ENCODE measurements at regions of chr14 and their contacts with region 1.

Region 1: DNA sequence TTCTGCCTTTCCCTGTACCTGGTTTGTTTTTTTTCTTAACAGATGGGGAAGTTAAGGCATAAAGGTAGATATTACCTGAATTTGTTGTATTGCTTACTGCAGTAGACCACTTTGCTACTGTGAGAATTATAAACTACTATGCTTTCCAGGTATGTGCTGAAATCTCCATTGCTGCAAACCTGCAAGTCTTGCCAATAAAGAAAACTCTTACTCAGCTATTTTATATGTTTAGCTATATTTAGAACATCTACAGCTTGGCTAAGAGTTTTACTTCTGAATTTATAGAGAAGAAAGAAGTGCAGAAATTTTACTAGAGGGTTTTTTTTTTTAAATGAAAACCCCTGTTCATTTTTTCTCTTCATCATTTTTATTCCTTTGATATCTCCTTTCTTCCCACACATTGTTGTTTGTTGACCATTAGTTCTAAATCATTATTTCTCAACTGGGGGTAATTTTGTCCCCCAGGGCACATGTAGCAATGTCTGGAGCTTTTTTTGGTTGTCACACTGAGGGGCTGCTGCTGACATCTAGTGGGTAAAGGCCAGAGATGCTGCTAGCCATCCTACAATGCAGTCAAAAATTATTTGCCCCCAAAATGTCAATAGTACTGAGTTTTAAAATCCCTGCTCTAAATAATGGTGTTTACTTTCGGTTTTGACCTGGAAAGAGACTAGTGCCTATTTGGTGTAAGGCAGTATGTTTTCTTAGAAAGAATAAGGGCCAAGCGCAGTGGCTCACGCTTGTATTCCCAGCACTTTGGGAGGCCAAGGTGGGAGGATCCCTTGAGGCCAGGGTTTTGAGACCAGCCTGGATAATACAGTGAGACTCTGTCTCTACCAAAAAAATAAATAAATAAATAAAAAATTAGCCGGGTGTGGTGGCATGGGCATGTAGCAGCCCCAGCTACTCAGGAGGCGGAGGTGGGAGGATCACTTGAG is 48.6 kb downstream of the PCNX1 start:
- DNase-seq: peak; percentile 41
- H3K4me3 ChIP-seq: no peak overlapping the region
- H3K27ac ChIP-seq: no peak overlapping the region
- H3K4me1 ChIP-seq: no peaks in the 10 kb centered on the region
- H3K27me3 ChIP-seq: no peaks in the 10 kb centered on the region
- CTCF ChIP-seq: peak; percentile 49 to 64
- POLR2A ChIP-seq: no peak

Region 2: GRCh38 chr14:70816525-70816924 is 139.3 kb before region 1 on chr14:
- CTCF ChIA-PET with region 1: interaction called, 43 read pairs
- POLR2A ChIA-PET with region 1: no interaction called
- dilution Hi-C with region 1: no loop called
- intact Hi-C with region 1: loop called (anchors 1 kb)
- DNase-seq: no peak
- H3K4me3 ChIP-seq: no peak overlapping the region
- H3K27ac ChIP-seq: no peak overlapping the region
- H3K4me1 ChIP-seq: no peaks in the 10 kb centered on the region
- H3K27me3 ChIP-seq: peaks cover 28 to 33% of the 10 kb centered on the region in 2 experiments
- CTCF ChIP-seq: no peak
- POLR2A ChIP-seq: no peak

Region 3: GRCh38 chr14:70821584-70822529 is 134.0 kb before region 1 on chr14:
- CTCF ChIA-PET with region 1: interaction called, 43 read pairs
- POLR2A ChIA-PET with region 1: no interaction called
- dilution Hi-C with region 1: no loop called
- intact Hi-C with region 1: loop called (anchors 1 kb)
- DNase-seq: peak; percentile 15
- H3K4me3 ChIP-seq: peak overlapping the region; percentile 25 to 57 (median 47)
- H3K27ac ChIP-seq: no peak overlapping the region
- H3K4me1 ChIP-seq: no peaks in the 10 kb centered on the region
- H3K27me3 ChIP-seq: peaks cover 37 to 45% of the 10 kb centered on the region in 2 experiments
- CTCF ChIP-seq: no peak
- POLR2A ChIP-seq: no peak

Region 4: DNA sequence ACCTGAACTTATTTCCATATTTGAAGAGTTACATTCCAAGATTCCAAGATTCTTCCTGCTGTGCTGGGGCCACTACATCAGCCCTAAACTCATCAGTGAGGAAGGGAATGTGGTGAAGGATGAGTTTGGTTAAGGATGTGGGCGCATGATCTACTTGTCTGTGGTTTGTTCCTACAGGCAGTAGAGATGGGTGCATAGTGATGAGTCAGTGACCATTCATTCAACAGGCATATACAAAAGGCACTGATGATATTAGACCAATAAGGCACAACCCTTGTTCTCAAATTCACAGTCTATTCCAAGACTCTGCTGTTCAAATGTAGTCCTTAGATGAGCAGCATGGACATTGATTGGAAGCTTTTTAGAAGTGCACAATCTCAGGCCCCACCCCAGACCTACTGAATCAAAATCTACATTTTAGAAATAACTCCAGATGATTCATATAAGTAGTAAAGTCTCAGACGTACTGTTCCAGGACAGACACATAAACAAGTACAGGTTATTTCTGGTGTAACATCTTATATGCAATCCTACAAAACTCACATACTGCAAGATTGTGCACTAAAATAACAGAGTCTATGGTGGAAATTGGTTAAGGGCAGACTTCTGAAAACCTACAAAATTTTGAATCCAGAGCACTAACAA is 98.8 kb before region 1 on chr14:
- CTCF ChIA-PET with region 1: no interaction called
- POLR2A ChIA-PET with region 1: no interaction called
- dilution Hi-C with region 1: no loop called
- intact Hi-C with region 1: no loop called
- DNase-seq: no peak
- H3K4me3 ChIP-seq: no peak overlapping the region
- H3K27ac ChIP-seq: no peak overlapping the region
- H3K4me1 ChIP-seq: no peaks in the 10 kb centered on the region
- H3K27me3 ChIP-seq: peaks cover 0 to 8% of the 10 kb centered on the region in 2 experiments
- CTCF ChIP-seq: no peak
- POLR2A ChIP-seq: no peak

Region 5: DNA sequence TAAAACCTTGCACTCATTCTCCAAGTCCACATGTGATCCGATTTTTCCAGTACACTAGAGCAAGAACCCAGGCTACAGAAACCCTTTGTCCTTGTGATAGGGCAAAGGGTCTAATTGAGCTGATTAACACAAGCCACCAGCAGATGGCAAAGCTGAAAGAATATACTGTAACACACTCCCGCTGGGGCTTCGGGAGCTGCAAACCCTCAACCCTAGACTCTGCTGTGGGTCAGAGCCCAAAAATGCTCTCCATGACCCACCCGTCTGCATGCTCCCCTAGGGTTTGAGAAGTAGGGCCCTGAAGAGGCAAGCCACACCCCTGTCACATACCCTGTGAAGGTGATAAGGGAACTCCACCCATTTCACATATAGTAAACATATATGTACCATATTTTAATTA is 82.2 kb before region 1 on chr14:
- CTCF ChIA-PET with region 1: interaction called, 20 read pairs
- POLR2A ChIA-PET with region 1: no interaction called
- dilution Hi-C with region 1: no loop called
- intact Hi-C with region 1: no loop called
- DNase-seq: no peak
- H3K4me3 ChIP-seq: no peak overlapping the region
- H3K27ac ChIP-seq: no peak overlapping the region
- H3K4me1 ChIP-seq: no peaks in the 10 kb centered on the region
- H3K27me3 ChIP-seq: peaks cover 8 to 12% of the 10 kb centered on the region in 2 experiments
- CTCF ChIP-seq: no peak
- POLR2A ChIP-seq: no peak

Measured in endothelial cell of umbilical vein (primary cell).